Head of caudate nucleus (tissue), 42 donors: ENCODE measurements at regions of chr18 and their contacts with region 1.

Region 1: GRCh38 chr18:58493516-58494253 is 135.2 kb downstream of the ALPK2 start:
- DNase-seq: peak; percentile 66 to 92 (median 83)

Region 2: GRCh38 chr18:58344861-58345463 is 148.7 kb before region 1 on chr18:
- intact Hi-C with region 1: loop called (anchors 10 kb)
- DNase-seq: peak in 1 of 42 donors; percentile 15

Region 3: GRCh38 chr18:58402247-58402646 is 91.4 kb before region 1 on chr18:
- intact Hi-C with region 1: no loop called
- DNase-seq: no peak

Region 4: DNA sequence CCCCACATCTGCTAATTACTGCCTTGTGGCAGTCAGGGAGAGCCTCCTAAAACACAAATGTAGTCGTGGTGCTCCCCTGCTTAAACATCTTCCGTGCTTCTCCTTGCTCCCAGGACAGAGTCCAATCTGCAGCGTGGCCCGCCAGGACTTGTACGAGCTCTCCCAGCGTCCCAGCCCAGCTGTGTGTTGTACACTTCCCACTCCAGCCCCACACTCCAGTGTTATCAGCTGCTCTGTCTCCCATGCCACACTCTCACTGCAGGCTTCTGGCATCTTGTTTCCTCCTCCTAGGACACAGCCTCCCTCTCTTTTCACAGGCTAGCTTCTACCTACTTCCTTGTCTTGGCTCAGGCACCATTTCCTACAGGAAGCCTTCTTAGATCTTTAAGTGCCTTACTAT is 64.2 kb before region 1 on chr18:
- intact Hi-C with region 1: no loop called
- DNase-seq: no peak